Activated CD8-positive, alpha-beta T cell treated with anti-CD3 and anti-CD28 coated beads for 36 hours (primary cell): ENCODE measurements at regions of chr2 and their contacts with region 1.

Region 1: GRCh38 chr2:101831351-101831865 is 133.9 kb downstream of the MAP4K4 start:
- DNase-seq: peak; percentile 80
- ATAC-seq: peak; percentile 63
- H3K4me3 Mint-ChIP-seq: no peak overlapping the region
- H3K27ac Mint-ChIP-seq: peak overlapping the region; percentile 76
- H3K4me1 Mint-ChIP-seq: peaks cover 53% of the 10 kb centered on the region
- H3K27me3 Mint-ChIP-seq: no peaks in the 10 kb centered on the region
- CTCF ChIP-seq: peak; percentile 68

Region 2: DNA sequence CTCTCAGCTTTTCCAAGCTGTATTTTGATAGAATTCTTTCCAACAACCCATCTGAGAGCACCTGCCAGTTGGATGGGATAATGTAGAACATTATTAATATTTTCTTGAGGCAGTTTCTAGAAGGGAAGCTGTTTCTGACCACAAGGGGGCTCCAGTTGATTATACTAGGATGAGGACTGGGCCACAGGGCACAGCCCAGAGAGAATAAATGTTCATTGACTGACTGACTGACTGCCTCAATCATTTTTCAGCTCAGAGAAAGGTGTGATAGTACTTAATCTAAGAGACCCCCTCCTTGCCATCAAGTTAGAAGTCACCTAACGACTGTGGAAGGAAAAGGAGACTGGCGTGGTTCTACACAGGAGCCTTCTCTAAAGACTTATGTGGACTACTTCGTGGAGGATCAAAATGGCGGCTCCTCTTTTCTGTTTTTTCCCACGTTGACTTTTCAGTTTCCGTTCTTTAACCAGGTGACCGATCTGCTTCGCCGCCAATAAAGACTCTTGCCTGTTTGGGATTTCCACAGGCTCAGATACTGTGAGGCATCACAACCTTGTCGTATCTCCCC is 412.2 kb before region 1 on chr2:
- CTCF ChIA-PET with region 1: interaction called, 94 read pairs
- POLR2A ChIA-PET with region 1: interaction called, 3 read pairs
- intact Hi-C with region 1: loop called (anchors 2 kb)
- DNase-seq: peak; percentile 79
- ATAC-seq: peak; percentile 82
- H3K4me3 Mint-ChIP-seq: no peak overlapping the region
- H3K27ac Mint-ChIP-seq: no peak overlapping the region
- H3K4me1 Mint-ChIP-seq: no peaks in the 10 kb centered on the region
- H3K27me3 Mint-ChIP-seq: no peaks in the 10 kb centered on the region
- CTCF ChIP-seq: peak; percentile 69

Region 3: DNA sequence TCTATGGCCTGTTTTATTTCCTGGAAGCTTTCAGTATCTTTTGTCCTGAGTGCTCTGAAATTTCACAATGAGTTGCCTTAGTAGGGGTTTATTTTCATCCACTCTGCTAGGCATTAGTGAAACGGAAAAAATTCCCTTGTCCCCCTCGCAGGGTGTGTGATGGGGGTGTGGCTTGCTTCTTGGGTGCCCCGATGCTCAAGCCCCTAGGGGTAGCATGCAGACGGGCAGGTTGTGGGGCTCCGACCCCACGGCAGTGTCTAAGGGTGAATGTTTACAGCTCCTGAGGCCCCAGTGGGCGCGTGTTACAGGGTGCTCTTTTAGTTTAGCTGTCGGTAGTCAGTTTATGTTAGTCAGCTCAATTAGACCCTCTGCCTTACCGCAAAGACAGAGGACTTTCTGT is 166.1 kb before region 1 on chr2:
- CTCF ChIA-PET with region 1: no interaction called
- POLR2A ChIA-PET with region 1: no interaction called
- intact Hi-C with region 1: no loop called
- DNase-seq: no peak
- ATAC-seq: no peak
- H3K4me3 Mint-ChIP-seq: no peak overlapping the region
- H3K27ac Mint-ChIP-seq: no peak overlapping the region
- H3K4me1 Mint-ChIP-seq: no peaks in the 10 kb centered on the region
- H3K27me3 Mint-ChIP-seq: no peaks in the 10 kb centered on the region
- CTCF ChIP-seq: no peak

Region 4: GRCh38 chr2:101697124-101698013 is 134.0 kb before region 1 on chr2 and contains the start of gene MAP4K4:
- CTCF ChIA-PET with region 1: interaction called, 11 read pairs
- POLR2A ChIA-PET with region 1: interaction called, 4 read pairs
- intact Hi-C with region 1: loop called (anchors 5 kb)
- DNase-seq: peak; percentile 75
- ATAC-seq: peak; percentile 41
- H3K4me3 Mint-ChIP-seq: peak within 1 kb of the TSS; percentile 76
- H3K27ac Mint-ChIP-seq: peak within 1 kb of the TSS; percentile 80
- H3K4me1 Mint-ChIP-seq: peaks cover 25% of the 10 kb centered on the region
- H3K27me3 Mint-ChIP-seq: peaks cover 2% of the 10 kb centered on the region
- CTCF ChIP-seq: no peak
- total RNA-seq, gene MAP4K4: 26.3 to 27.3 TPM

Region 5: DNA sequence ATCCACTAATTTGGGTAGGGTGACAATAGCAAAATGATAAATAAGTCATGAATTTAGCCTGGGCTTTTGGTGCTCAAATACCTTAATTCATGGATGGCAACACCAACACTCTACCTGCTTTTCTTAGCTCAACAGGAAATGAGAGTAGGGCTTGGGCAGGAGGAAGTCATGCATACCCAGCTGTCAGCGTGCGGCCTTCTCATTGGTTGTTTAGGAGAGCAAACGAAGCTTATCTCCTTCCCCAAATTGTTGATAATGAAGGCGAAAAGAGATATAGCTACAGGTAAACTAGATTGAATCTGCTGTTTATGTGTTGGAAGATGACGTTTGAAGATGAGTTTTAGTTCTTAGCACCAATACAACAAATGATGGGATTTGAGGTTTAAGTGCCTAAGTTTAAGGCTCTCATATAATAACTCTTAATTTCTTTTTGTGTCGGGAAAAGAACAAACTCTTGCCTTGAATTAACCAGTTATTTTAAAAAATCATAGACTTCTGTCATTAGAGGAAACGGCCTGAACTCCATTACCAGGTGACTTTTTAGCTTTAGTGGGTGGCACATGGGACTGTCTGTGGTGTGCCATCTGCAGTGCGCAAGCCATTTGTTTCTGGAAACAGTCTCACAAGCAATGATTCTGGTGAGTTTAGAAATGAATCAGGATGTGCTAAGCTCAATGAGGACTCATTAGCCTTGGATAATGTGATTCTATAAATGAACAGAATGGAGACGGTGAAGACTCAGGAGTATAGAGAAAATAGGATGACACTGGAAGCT is 114.2 kb before region 1 on chr2:
- CTCF ChIA-PET with region 1: interaction called, 11 read pairs
- POLR2A ChIA-PET with region 1: no interaction called
- intact Hi-C with region 1: no loop called
- DNase-seq: peak; percentile 68
- ATAC-seq: peak; percentile 28
- H3K4me3 Mint-ChIP-seq: peak overlapping the region; percentile 10
- H3K27ac Mint-ChIP-seq: peak overlapping the region; percentile 99
- H3K4me1 Mint-ChIP-seq: peaks cover 72% of the 10 kb centered on the region
- H3K27me3 Mint-ChIP-seq: no peaks in the 10 kb centered on the region
- CTCF ChIP-seq: no peak

Region 6: DNA sequence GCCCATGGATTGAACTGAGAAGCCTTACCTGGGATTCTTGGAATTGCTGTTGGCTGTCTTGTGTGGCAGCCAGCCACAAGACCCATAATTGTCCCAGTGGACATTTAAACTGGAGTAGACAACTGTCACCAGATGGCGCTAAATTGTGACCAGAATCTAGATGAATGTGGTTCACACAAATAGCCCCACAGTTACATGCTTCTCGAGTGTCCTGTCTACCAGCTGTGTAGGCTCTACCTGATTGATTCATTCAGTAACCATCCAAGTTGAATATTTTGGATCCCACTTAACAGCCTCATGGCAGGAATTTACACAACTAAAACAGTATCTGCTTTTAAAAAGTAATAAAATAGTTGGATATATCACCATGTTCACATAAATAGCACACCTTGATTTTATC is 60.7 kb before region 1 on chr2:
- CTCF ChIA-PET with region 1: interaction called, 12 read pairs
- POLR2A ChIA-PET with region 1: no interaction called
- intact Hi-C with region 1: loop called (anchors 10 kb)
- DNase-seq: peak; percentile 49
- ATAC-seq: peak; percentile 31
- H3K4me3 Mint-ChIP-seq: no peak overlapping the region
- H3K27ac Mint-ChIP-seq: no peak overlapping the region
- H3K4me1 Mint-ChIP-seq: peaks cover 82% of the 10 kb centered on the region
- H3K27me3 Mint-ChIP-seq: no peaks in the 10 kb centered on the region
- CTCF ChIP-seq: peak; percentile 47

Region 7: DNA sequence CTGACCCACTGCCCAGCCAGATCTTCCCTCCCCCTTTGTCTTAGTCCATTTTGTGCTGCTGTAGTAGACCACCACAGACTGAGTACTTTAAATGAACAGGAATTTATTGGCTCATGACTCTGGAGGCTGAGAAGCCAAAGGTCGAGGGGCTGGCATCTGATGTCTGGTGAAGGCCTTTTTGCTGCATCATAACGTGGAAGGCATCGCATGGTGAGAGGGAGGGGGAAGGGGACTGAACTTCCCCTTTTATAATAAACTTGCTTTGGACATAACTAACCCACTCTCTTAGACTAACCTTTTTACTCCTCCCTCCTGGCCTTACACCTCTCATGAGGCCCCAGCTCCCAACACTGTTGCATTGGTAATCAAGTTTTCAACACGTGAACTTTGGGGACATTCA is 50.1 kb before region 1 on chr2:
- CTCF ChIA-PET with region 1: interaction called, 14 read pairs
- POLR2A ChIA-PET with region 1: no interaction called
- intact Hi-C with region 1: loop called (anchors 10 kb)
- DNase-seq: no peak
- ATAC-seq: peak; percentile 22
- H3K4me3 Mint-ChIP-seq: no peak overlapping the region
- H3K27ac Mint-ChIP-seq: peak overlapping the region; percentile 14
- H3K4me1 Mint-ChIP-seq: peaks cover 74% of the 10 kb centered on the region
- H3K27me3 Mint-ChIP-seq: no peaks in the 10 kb centered on the region
- CTCF ChIP-seq: no peak

Region 8: GRCh38 chr2:101846973-101847372 is 15.6 kb after region 1 on chr2:
- CTCF ChIA-PET with region 1: interaction called, 13 read pairs
- POLR2A ChIA-PET with region 1: no interaction called
- intact Hi-C with region 1: no loop called
- DNase-seq: no peak
- ATAC-seq: no peak
- H3K4me3 Mint-ChIP-seq: no peak overlapping the region
- H3K27ac Mint-ChIP-seq: no peak overlapping the region
- H3K4me1 Mint-ChIP-seq: peaks cover 10% of the 10 kb centered on the region
- H3K27me3 Mint-ChIP-seq: no peaks in the 10 kb centered on the region
- CTCF ChIP-seq: no peak

Region 9: GRCh38 chr2:102155642-102156491 is 324.5 kb after region 1 on chr2:
- CTCF ChIA-PET with region 1: no interaction called
- POLR2A ChIA-PET with region 1: no interaction called
- intact Hi-C with region 1: no loop called
- DNase-seq: no peak
- ATAC-seq: no peak
- H3K4me3 Mint-ChIP-seq: no peak overlapping the region
- H3K27ac Mint-ChIP-seq: no peak overlapping the region
- H3K4me1 Mint-ChIP-seq: no peaks in the 10 kb centered on the region
- H3K27me3 Mint-ChIP-seq: no peaks in the 10 kb centered on the region
- CTCF ChIP-seq: no peak